ENCODE measurements at regions of chr14 and their contacts with region 1.

Region 1: DNA sequence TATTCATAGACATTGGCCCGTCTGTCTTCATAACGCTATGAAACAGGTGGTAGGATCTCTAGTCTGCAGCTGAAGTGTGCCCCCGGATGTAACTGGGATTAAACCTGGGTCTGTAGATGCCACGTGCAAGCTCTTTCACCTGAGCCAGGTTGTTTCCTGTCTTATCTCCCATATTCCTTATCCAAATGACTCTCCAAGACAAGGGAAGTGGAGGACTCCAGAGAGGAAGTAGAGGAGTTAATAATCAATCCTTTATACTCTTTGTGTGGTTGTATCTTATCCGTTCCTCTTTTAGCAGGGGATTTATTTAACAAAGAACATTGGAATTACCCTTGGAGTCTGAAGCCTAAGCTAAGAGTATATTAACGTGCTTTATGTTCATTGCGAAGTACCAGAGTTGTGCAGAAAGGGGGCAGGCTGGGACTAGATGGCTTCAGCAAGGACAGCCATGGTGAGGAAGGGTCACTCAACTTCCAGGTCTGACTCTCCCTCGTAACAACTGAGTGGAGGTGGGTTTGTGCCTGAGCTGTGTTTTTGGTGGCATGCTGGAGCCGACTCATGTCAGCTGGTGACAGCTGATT is 82.8 kb downstream of the RIN3 start:
- DNase-seq: no peak
- H3K4me3 ChIP-seq: no peak overlapping the region
- CTCF ChIP-seq: no peak

Region 2: GRCh38 chr14:92585981-92586937 is 10.2 kb before region 1 on chr14:
- CTCF ChIA-PET with region 1: interaction called, 33 read pairs
- POLR2A ChIA-PET with region 1: no interaction called
- DNase-seq: peak; percentile 99
- H3K4me3 ChIP-seq: no peak overlapping the region
- CTCF ChIP-seq: no peak

Measured in AG04449 (cell line).